ENCODE measurements at regions of chr12 and their contacts with region 1.

Region 1: DNA sequence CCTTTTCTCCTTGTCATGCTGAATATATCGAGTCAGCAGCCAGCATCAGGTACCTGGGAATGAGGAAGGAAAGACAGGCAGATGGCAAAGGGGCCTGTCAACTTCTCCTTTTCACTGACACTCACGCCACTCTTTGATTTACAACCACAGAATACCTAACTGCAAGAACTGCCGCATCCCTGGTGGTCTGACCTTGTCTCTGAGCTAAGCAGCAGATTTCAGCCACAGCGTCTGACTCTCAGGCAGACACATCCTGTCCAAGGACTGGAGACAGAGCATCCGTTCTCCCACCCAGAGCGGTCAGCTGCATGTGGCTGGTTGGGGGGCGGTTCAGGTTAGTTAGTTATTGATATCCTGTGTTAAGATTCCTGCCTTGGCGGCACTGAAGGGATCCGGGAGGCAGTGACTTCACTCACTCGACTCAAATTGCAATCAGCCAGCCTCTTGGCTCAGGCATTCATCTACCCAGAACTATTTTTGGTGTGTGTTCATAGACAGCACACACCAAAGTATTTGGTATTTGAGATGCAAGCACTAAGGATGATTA is 11.2 kb upstream of the MAP1LC3B2 start:
- DNase-seq: no peak
- H3K4me3 ChIP-seq: no peak overlapping the region
- H3K27ac ChIP-seq: no peak overlapping the region
- H3K4me1 ChIP-seq: no peaks in the 10 kb centered on the region
- H3K27me3 ChIP-seq: no peaks in the 10 kb centered on the region
- CTCF ChIP-seq: no peak
- POLR2A ChIP-seq: no peak

Region 2: DNA sequence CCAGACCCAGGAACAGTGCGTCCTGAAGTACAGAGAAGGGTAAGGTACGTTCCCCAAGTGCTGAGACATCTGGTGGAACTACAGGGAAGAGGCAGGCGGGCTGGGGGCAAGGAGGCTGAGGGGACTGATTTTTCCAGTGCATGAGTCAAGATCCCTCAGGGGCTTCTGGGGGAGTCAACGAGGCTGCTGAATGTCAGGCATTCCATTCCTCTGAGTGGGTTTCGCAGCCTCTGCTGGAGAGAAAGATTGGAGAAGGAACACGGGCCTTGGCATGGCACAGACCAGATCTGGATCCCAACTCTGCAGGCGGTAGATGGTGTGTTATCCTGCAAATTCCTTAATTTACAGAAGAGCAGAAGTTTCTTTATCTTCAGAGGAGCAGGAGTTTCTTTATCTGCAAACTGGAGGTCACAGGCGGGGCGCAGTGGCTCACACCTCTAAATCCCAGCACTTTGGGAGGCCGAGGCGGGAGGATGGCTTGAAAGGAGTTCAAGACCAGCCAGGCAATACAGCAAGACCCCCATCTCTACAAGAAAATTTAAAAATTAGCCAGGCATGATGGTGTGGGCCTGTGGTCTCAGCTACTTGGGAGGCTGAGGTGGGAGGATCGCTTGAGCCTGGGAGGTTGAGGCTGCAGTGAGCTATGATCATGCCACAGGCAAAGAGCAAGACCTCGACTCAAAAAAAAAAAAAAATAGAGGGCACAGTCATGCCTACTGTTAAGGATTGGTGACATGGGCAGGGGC is 121.5 kb before region 1 on chr12:
- intact Hi-C with region 1: loop called (anchors 10 kb)
- DNase-seq: peak in 1 of 2 donors; percentile 92
- H3K4me3 ChIP-seq: no peak overlapping the region
- H3K27ac ChIP-seq: peak overlapping the region; percentile 20
- H3K4me1 ChIP-seq: peaks cover 32% of the 10 kb centered on the region
- H3K27me3 ChIP-seq: no peaks in the 10 kb centered on the region
- CTCF ChIP-seq: no peak
- POLR2A ChIP-seq: no peak